ENCODE measurements at regions of chr2 and their contacts with region 1.

Region 1: DNA sequence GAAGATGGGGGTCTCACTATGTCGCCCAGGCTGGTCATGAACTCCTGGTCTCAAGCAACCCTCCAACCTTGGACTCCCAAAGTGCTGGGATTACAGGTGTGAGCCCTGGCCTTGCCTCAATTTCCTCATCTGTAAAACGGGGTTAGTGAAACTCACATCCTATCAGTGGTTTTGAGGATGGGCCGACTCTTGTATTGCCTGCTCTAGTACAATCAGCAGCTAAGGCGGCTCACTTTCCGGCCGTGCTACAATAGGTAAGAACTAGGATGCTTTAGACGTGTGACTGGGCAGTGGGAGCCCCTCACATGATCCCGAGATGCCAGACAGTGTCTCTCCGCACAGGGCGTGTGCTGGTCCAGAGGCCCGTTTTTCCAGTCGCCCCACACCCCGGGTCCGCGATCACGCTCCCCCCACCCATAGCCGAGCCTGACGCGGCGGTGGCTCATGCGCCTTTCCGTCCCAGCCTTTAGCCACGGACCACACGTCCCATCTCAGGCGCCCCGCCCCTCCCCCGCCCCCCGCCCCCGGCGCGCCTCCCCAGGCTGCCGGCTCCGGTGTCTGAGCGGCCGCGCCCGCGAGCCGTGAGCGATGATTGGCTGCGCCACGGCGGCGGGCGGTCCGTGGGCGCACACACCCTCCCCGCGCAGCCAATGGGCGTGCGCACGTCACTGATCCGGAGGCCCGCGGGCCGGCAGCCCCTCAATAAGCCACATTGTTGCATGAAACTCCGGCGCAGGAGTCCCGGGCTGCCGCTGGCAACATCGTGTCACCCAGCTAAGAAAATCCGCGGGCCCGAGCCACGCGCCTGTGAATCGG is at the start of gene HK2:
- DNase-seq: peak; percentile 93
- ATAC-seq: peak; percentile 86
- H3K4me3 Mint-ChIP-seq: peak within 1 kb of the TSS; percentile 89
- H3K27ac Mint-ChIP-seq: peak within 1 kb of the TSS; percentile 95
- H3K4me1 Mint-ChIP-seq: peaks cover 48% of the 10 kb centered on the region
- H3K27me3 Mint-ChIP-seq: no peaks in the 10 kb centered on the region
- total RNA-seq, gene HK2: 84.4 to 105 TPM

Region 2: GRCh38 chr2:74198461-74199274 is 635.0 kb before region 1 on chr2 and contains the start of gene MTHFD2:
- CTCF ChIA-PET with region 1: no interaction called
- POLR2A ChIA-PET with region 1: no interaction called
- intact Hi-C with region 1: loop called in 1 of 2 experiments (anchors 5 kb)
- DNase-seq: peak; percentile 96
- ATAC-seq: peak; percentile 90
- H3K4me3 Mint-ChIP-seq: peak within 1 kb of the TSS; percentile 100
- H3K27ac Mint-ChIP-seq: peak within 1 kb of the TSS; percentile 100
- H3K4me1 Mint-ChIP-seq: peaks cover 40% of the 10 kb centered on the region
- H3K27me3 Mint-ChIP-seq: no peaks in the 10 kb centered on the region
- total RNA-seq, gene MTHFD2: 411 to 453 TPM

Region 3: DNA sequence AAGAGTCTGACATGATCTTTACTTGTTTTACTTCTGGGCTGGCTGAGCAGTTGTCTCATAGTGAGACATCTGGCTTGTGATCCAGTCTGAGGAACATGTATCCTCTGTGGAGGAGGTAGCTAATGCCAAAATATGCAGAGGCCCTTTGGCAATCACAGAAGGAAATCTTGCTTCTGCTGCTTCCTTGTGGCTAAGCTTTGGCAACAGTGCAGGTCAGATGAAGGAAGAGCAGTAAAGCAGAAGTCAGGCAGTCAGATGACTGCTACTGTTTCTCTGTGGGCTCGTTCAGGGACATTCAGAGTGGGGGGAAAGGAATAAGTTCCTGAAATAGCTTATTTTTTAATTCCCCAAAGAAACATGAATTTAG is 256.8 kb before region 1 on chr2:
- CTCF ChIA-PET with region 1: no interaction called
- POLR2A ChIA-PET with region 1: no interaction called
- intact Hi-C with region 1: loop called in 1 of 2 experiments (anchors 5 kb)
- DNase-seq: no peak
- ATAC-seq: no peak
- H3K4me3 Mint-ChIP-seq: no peak overlapping the region
- H3K27ac Mint-ChIP-seq: no peak overlapping the region
- H3K4me1 Mint-ChIP-seq: peaks cover 23% of the 10 kb centered on the region
- H3K27me3 Mint-ChIP-seq: peaks cover 1% of the 10 kb centered on the region

Region 4: GRCh38 chr2:74715078-74715791 is 118.4 kb before region 1 on chr2:
- CTCF ChIA-PET with region 1: interaction called, 5 read pairs
- POLR2A ChIA-PET with region 1: no interaction called
- intact Hi-C with region 1: loop called (anchors 1 to 2 kb)
- DNase-seq: peak; percentile 90
- ATAC-seq: peak; percentile 91
- H3K4me3 Mint-ChIP-seq: peak overlapping the region; percentile 77
- H3K27ac Mint-ChIP-seq: peak overlapping the region; percentile 45
- H3K4me1 Mint-ChIP-seq: peaks cover 7% of the 10 kb centered on the region
- H3K27me3 Mint-ChIP-seq: peaks cover 11% of the 10 kb centered on the region

Region 5: DNA sequence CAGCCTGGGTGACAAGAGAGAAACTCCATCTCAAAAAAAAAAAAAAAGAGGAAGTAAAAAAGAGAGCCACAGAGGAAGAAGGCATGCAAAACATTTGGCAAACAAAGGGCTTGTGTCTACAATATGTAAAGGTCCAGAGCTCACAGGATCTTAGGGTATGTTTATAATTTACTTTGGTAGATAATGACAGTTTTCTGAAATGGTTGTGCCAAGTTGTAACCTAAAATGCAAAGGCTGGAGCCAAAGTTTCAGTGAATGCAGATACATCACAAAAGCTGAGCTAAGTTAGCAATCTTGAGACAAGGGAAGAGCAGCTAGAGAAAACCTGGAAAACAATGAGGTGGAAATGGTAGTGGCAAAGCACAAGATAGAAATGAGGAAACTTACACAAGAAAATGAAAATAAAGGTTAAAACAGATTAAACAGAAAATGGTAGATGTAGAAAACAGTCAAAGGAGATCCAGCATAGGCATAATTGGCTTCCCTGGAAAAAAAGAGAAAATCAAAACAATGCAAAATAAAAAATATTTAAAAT is 77.2 kb before region 1 on chr2:
- CTCF ChIA-PET with region 1: no interaction called
- POLR2A ChIA-PET with region 1: no interaction called
- intact Hi-C with region 1: no loop called
- DNase-seq: no peak
- ATAC-seq: no peak
- H3K4me3 Mint-ChIP-seq: no peak overlapping the region
- H3K27ac Mint-ChIP-seq: no peak overlapping the region
- H3K4me1 Mint-ChIP-seq: no peaks in the 10 kb centered on the region
- H3K27me3 Mint-ChIP-seq: peaks cover 4% of the 10 kb centered on the region

Region 6: DNA sequence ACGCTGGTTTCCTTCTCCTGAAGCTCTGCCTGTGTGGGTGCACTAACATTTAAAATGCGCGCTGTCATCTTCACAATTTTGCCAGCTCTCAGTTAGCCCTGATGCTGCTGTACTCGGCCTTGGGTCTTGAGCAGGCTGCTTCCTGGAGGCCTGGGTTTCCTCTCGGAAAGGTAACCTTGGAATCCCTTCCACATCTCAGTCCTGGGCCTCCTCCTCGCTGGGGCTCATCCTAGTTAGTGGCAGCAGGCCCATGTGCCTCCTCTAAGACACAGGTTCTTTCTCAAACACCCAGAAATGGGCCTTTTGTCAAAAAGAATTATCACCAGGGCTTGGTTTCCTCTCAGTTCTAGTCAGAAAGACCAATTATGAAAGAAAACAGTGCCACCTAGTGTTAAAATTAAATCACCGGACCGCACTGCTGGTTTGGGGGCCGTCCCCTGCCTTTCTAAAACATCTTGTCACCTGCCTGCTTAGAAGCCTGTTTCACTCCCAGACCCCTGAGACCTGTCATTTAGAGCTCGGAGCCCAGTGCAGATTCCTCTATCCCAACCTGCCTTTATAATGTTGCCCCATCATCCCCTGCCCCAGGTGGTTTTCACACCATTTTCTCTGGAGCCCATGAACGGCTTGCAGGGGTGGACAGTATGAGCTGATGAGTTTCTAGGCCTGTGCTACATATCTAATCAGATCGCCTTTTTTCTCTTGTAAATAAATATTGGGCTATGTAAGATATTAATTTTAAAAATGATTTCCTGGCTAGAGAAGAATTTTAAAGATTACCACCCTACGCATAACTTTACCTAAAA is 42.7 kb after region 1 on chr2:
- CTCF ChIA-PET with region 1: interaction called, 6 read pairs
- POLR2A ChIA-PET with region 1: interaction called, 3 read pairs
- intact Hi-C with region 1: loop called (anchors 1 kb)
- DNase-seq: peak; percentile 54
- ATAC-seq: peak; percentile 91
- H3K4me3 Mint-ChIP-seq: no peak overlapping the region
- H3K27ac Mint-ChIP-seq: peak overlapping the region; percentile 21
- H3K4me1 Mint-ChIP-seq: no peaks in the 10 kb centered on the region
- H3K27me3 Mint-ChIP-seq: no peaks in the 10 kb centered on the region